K562 (cell line): ENCODE measurements at regions of chr10 and their contacts with region 1.

Region 1: GRCh38 chr10:6014241-6014761 is 37.0 kb upstream of the IL15RA start:
- DNase-seq: peak; percentile 25 to 68 (median 43)
- ATAC-seq: peak; percentile 91
- H3K4me3 ChIP-seq: no peak overlapping the region
- H3K27ac ChIP-seq: no peak overlapping the region
- H3K4me1 ChIP-seq: peaks cover 0 to 5% of the 10 kb centered on the region in 2 experiments; a peak in 3 of 5 replicates
- H3K27me3 ChIP-seq: peaks cover 4 to 10% of the 10 kb centered on the region in 2 experiments; a peak in 2 of 5 replicates
- CTCF ChIP-seq: peak; percentile 74 to 79 (median 78)
- EP300 ChIP-seq: no peak
- POLR2A ChIP-seq: no peak
- RAD21 ChIP-seq: peak; percentile 63 to 80

Region 2: GRCh38 chr10:5915451-5915850 is 98.8 kb before region 1 on chr10:
- CTCF ChIA-PET with region 1: no interaction called
- POLR2A ChIA-PET with region 1: no interaction called
- in situ Hi-C with region 1: no loop called
- intact Hi-C with region 1: no loop called
- DNase-seq: no peak
- ATAC-seq: no peak
- H3K4me3 ChIP-seq: no peak overlapping the region
- H3K27ac ChIP-seq: no peak overlapping the region; the same call in 2 of the 3 replicates
- H3K4me1 ChIP-seq: no peaks in the 10 kb centered on the region
- H3K27me3 ChIP-seq: no peaks in the 10 kb centered on the region
- CTCF ChIP-seq: no peak
- EP300 ChIP-seq: no peak
- POLR2A ChIP-seq: no peak
- RAD21 ChIP-seq: no peak

Region 3: GRCh38 chr10:6050801-6051445 is 36.6 kb after region 1 on chr10:
- CTCF ChIA-PET with region 1: interaction called, 7 read pairs
- POLR2A ChIA-PET with region 1: no interaction called
- in situ Hi-C with region 1: no loop called
- intact Hi-C with region 1: loop called (anchors 1 kb)
- DNase-seq: peak; percentile 23 to 61 (median 50)
- ATAC-seq: peak; percentile 85
- H3K4me3 ChIP-seq: no peak overlapping the region
- H3K27ac ChIP-seq: no peak overlapping the region
- H3K4me1 ChIP-seq: peaks cover 10 to 14% of the 10 kb centered on the region in 2 experiments
- H3K27me3 ChIP-seq: peaks cover 7 to 22% of the 10 kb centered on the region in 2 experiments; a peak in 4 of 5 replicates
- CTCF ChIP-seq: peak; percentile 59 to 82 (median 65); a peak in 5 of 6 replicates
- EP300 ChIP-seq: no peak
- POLR2A ChIP-seq: no peak
- RAD21 ChIP-seq: peak; percentile 52 to 80

Region 4: DNA sequence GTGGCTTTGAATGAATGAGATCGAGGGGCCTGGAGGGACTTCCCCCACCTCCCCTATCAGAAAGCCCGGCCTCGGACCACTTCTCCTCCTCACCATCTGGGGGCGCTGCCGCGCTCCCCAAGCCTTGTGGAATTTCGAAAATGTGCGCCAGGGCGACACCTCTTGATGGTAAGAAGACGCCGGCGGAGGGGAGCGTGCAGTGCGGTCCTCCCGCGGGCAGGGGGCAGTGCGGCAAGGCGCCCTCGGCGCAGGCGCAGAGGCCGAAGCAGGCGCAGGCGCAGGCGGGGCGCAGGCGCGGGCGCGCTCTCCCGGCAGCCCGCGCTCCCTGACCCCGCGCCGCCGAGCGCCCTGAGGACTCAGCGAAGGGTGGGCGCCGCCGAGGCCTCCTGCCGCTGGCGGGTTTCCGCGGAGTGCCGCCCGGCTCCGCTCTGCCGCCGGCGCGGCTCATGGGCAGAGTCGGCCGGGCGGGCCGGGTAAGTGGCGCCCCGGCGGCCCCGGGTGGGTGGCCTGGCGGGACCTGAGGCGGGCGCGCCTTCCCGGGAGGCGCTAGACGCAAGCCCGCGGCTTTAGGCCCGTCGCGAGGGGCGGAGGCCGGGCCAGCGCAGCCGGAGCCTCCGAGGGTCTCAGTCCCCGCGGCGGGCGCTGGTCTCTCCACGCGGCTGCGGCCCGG is 74.6 kb after region 1 on chr10 and contains the start of gene RBM17:
- CTCF ChIA-PET with region 1: interaction called, 13 read pairs
- POLR2A ChIA-PET with region 1: no interaction called
- in situ Hi-C with region 1: no loop called
- intact Hi-C with region 1: loop called (anchors 10 kb)
- DNase-seq: peak; percentile 93 to 97 (median 95)
- ATAC-seq: peak; percentile 93
- H3K4me3 ChIP-seq: peak within 1 kb of the TSS; percentile 98
- H3K27ac ChIP-seq: peak within 1 kb of the TSS; percentile 89
- H3K4me1 ChIP-seq: peaks cover 14 to 17% of the 10 kb centered on the region in 2 experiments; a peak in 4 of 5 replicates
- H3K27me3 ChIP-seq: peaks cover 4% of the 10 kb centered on the region in 2 experiments; a peak in 4 of 5 replicates
- CTCF ChIP-seq: peak; percentile 100
- EP300 ChIP-seq: no peak; the same call in 1 of the 2 replicates
- POLR2A ChIP-seq: no peak
- RAD21 ChIP-seq: peak; percentile 92 to 93
- polyA plus RNA-seq, gene RBM17: 23.6 to 25.8 TPM

Region 5: GRCh38 chr10:6748978-6749635 is 734.8 kb after region 1 on chr10:
- CTCF ChIA-PET with region 1: no interaction called
- POLR2A ChIA-PET with region 1: no interaction called
- in situ Hi-C with region 1: no loop called
- intact Hi-C with region 1: no loop called
- DNase-seq: no peak
- ATAC-seq: no peak
- H3K4me3 ChIP-seq: no peak overlapping the region
- H3K27ac ChIP-seq: no peak overlapping the region
- H3K4me1 ChIP-seq: no peaks in the 10 kb centered on the region
- H3K27me3 ChIP-seq: peaks cover 2 to 10% of the 10 kb centered on the region in 2 experiments; a peak in 3 of 5 replicates
- CTCF ChIP-seq: no peak
- EP300 ChIP-seq: no peak
- POLR2A ChIP-seq: no peak
- RAD21 ChIP-seq: no peak